ENCODE measurements at regions of chr4 and their contacts with region 1.

Region 1: DNA sequence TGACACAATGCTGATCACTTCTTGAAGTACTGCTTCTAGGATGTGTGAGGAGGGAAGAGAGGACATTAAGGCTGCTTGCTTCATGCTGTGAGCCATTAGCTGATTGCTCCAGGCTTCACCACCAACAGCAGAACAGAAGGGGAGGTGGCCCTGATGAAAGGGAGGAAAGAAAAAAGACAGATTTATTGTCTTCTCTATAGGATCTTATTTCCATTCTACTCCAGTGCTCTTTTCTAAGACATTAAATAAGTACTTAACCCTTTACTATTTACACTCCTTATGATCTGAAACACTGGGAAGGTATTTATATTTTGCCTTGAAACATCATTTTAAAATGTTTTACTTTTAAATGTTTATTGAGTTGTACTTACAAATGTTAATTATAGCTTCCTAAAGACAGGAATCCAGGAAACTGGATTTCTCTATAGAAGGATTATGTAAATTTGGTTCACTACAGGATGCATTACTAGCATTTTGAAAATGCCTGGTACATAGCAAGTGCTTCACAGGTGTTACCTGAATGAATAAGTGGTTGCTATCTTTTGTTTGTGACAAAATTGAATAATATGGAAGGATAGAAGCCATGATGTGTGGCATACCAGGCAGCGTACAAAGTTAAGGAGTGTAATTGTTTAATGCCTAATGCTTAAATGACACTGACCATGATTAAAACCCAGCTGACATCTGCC is 680.9 kb upstream of the ATOH1 start:
- DNase-seq: no peak
- ATAC-seq: no peak
- H3K4me3 ChIP-seq: no peak overlapping the region
- H3K27ac ChIP-seq: no peak overlapping the region
- H3K4me1 ChIP-seq: no peaks in the 10 kb centered on the region
- H3K27me3 ChIP-seq: no peaks in the 10 kb centered on the region
- CTCF ChIP-seq: no peak

Region 2: GRCh38 chr4:93700571-93700970 is 552.9 kb after region 1 on chr4:
- intact Hi-C with region 1: loop called in 1 of 10 experiments (anchors 10 kb)
- DNase-seq: no peak
- ATAC-seq: no peak
- H3K4me3 ChIP-seq: no peak overlapping the region
- H3K27ac ChIP-seq: no peak overlapping the region
- H3K4me1 ChIP-seq: no peaks in the 10 kb centered on the region
- H3K27me3 ChIP-seq: no peaks in the 10 kb centered on the region
- CTCF ChIP-seq: no peak